Activated CD4-positive, alpha-beta memory T cell treated with anti-CD3 and anti-CD28 coated beads, Interleukin-2, amount 10 ng/mL, durations not matched to agents 7 days and 5 days (primary cell): ENCODE measurements at regions of chr3 and their contacts with region 1.

Region 1: GRCh38 chr3:57555738-57556458 is at the start of gene PDE12:
- DNase-seq: peak; percentile 86
- H3K4me3 Mint-ChIP-seq: peak within 1 kb of the TSS; percentile 97
- H3K27ac Mint-ChIP-seq: peak within 1 kb of the TSS; percentile 93
- H3K4me1 Mint-ChIP-seq: peaks cover 37% of the 10 kb centered on the region
- H3K27me3 Mint-ChIP-seq: no peaks in the 10 kb centered on the region
- total RNA-seq, gene PDE12: 25.9 to 27.7 TPM

Region 2: GRCh38 chr3:57572096-57572495 is 16.2 kb after region 1 on chr3:
- CTCF ChIA-PET with region 1: interaction called, 4 read pairs
- POLR2A ChIA-PET with region 1: interaction called, 30 read pairs
- DNase-seq: no peak
- H3K4me3 Mint-ChIP-seq: no peak overlapping the region
- H3K27ac Mint-ChIP-seq: no peak overlapping the region
- H3K4me1 Mint-ChIP-seq: peaks cover 10% of the 10 kb centered on the region
- H3K27me3 Mint-ChIP-seq: no peaks in the 10 kb centered on the region

Region 3: GRCh38 chr3:57597122-57597923 is 41.4 kb after region 1 on chr3 and contains the start of gene ARF4:
- CTCF ChIA-PET with region 1: interaction called, 10 read pairs
- POLR2A ChIA-PET with region 1: interaction called, 173 read pairs
- DNase-seq: peak; percentile 100
- H3K4me3 Mint-ChIP-seq: peak within 1 kb of the TSS; percentile 87
- H3K27ac Mint-ChIP-seq: peak within 1 kb of the TSS; percentile 98
- H3K4me1 Mint-ChIP-seq: peaks cover 45% of the 10 kb centered on the region
- H3K27me3 Mint-ChIP-seq: no peaks in the 10 kb centered on the region
- total RNA-seq, gene ARF4: 64.9 to 68.9 TPM

Region 4: DNA sequence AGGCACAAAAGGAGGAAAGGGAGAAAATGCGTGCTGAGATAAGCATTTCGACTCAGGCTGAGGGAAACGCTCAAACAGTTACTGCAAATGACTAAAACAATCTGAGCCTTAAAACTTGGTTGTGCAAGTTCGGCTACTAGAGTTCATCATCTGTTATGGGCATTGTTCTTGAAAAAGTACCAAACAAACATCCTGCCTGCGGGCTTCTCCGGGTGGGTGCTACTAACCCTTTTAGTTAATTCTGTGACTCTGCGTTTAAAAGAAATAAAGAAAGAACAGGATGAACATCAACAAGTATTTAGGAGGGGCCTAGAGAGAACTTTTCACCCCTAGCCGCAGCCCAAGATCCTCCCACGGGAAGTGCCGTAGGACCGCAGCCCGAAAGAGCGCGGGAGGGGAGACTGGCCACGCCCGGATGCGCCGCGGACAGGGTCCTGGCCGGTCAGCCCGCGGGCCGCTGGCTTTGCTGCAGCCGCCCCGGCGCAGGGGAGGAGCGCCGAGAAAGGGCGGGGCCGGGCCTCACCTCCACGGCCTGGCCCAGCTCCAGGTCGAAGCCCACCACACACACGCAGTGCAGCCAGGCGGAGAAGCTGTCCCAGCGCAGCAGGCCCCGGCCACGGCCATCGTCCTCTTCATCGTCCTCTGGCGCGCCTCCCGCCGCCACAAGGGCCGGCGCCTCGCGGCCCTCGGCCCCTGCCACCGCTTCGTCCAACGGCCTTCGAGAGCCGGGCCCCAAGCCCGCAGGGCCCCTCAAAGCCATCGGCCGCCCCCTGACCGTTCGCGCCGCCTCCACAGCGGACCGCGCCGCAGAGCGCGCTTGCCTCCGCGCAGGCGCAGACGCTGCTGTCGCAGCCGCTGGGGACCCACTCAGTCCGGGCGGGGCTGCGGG is 136.6 kb after region 1 on chr3 and contains the start of gene DENND6A:
- CTCF ChIA-PET with region 1: interaction called, 3 read pairs
- POLR2A ChIA-PET with region 1: interaction called, 28 read pairs
- DNase-seq: peak; percentile 97
- H3K4me3 Mint-ChIP-seq: peak within 1 kb of the TSS; percentile 81
- H3K27ac Mint-ChIP-seq: peak within 1 kb of the TSS; percentile 89
- H3K4me1 Mint-ChIP-seq: peaks cover 39% of the 10 kb centered on the region
- H3K27me3 Mint-ChIP-seq: peaks cover 2% of the 10 kb centered on the region
- total RNA-seq, gene DENND6A: 28.5 to 29.6 TPM